ENCODE measurements at regions of chr6 and their contacts with region 1.

Region 1: DNA sequence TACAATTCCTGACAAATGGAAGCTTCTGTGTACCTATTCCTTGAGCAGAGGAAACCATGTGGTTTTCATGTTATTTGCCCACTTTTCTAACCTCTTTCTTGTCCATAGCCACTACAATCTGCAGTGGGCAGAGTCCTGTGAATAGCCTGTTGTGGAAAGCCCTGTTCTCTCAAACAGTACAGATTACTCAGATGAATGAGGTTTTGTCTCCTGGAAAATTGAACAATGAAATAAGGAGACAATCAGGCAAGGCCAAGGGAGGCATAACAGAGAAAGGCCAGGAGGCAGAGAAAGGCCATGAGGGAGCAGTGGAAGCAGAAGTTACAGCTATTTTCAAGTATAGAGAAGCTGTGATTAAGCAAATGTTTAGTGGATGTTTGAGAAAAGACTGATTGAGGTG is 189.3 kb downstream of the GRIK2 start:
- DNase-seq: no peak
- ATAC-seq: no peak
- H3K4me3 ChIP-seq: no peak overlapping the region
- H3K4me3 Mint-ChIP-seq: no peak overlapping the region
- H3K27ac ChIP-seq: no peak overlapping the region
- H3K27ac Mint-ChIP-seq: no peak overlapping the region
- H3K4me1 ChIP-seq: no peaks in the 10 kb centered on the region
- H3K4me1 Mint-ChIP-seq: no peaks in the 10 kb centered on the region
- H3K27me3 ChIP-seq: no peaks in the 10 kb centered on the region
- H3K27me3 Mint-ChIP-seq: no peaks in the 10 kb centered on the region

Region 2: GRCh38 chr6:99933129-99933528 is 1649.7 kb before region 1 on chr6:
- CTCF ChIA-PET with region 1: interaction called in 1 of 2 experiments, 13 read pairs
- POLR2A ChIA-PET with region 1: no interaction called
- DNase-seq: no peak
- ATAC-seq: no peak
- H3K4me3 ChIP-seq: no peak overlapping the region
- H3K4me3 Mint-ChIP-seq: no peak overlapping the region
- H3K27ac ChIP-seq: no peak overlapping the region
- H3K27ac Mint-ChIP-seq: no peak overlapping the region
- H3K4me1 ChIP-seq: no peaks in the 10 kb centered on the region
- H3K4me1 Mint-ChIP-seq: no peaks in the 10 kb centered on the region
- H3K27me3 ChIP-seq: no peaks in the 10 kb centered on the region
- H3K27me3 Mint-ChIP-seq: peaks cover 0 to 4% of the 10 kb centered on the region in 2 donors

Region 3: GRCh38 chr6:101747716-101748115 is 164.9 kb after region 1 on chr6:
- CTCF ChIA-PET with region 1: no interaction called
- POLR2A ChIA-PET with region 1: no interaction called
- DNase-seq: no peak
- ATAC-seq: no peak
- H3K4me3 ChIP-seq: no peak overlapping the region
- H3K4me3 Mint-ChIP-seq: no peak overlapping the region
- H3K27ac ChIP-seq: no peak overlapping the region
- H3K27ac Mint-ChIP-seq: no peak overlapping the region
- H3K4me1 ChIP-seq: no peaks in the 10 kb centered on the region
- H3K4me1 Mint-ChIP-seq: no peaks in the 10 kb centered on the region
- H3K27me3 ChIP-seq: no peaks in the 10 kb centered on the region
- H3K27me3 Mint-ChIP-seq: no peaks in the 10 kb centered on the region

Measured in T-cell (primary cell).